SK-N-SH (cell line): ENCODE measurements at regions of chr12 and their contacts with region 1.

Region 1: DNA sequence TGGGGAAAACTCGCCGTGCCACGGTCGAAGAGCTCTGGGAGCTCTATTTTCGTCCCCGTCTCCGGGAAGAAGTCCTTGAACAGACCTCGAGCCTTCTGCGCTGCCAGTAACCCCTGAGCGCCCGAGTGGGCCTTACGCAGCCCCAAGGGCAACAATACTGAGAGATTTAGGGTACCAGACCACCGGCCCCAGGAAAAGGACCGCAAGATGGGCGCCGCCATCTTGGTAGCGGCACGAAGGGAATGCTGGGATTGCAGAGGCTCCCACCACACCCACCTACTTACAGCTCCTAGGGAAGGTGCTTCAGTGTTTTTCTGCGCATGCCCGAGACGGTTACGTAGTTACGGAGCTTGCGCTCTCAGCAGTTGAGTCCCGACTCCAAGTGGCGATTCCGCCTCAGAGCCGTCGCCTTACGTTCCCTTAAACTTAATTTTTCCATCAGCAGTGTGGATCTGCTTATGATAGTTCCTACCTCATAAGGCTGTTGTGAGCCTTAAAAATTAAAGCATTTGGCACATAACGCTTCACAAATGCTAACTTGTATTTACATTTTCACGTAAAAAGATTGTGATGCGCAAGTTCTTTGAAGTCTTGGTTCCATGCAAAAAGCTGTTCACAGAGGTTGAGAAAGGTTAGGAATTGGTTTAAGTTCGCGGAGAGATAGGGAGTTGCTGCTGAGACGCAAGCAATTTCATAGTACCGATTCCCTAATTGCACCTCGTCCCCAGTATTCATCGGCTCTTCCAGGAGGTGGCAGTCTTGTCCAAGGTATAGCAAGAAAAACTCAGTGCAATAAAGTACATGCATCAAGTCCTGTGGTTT is at the start of gene YARS2:
- DNase-seq: peak; percentile 90
- H3K4me3 ChIP-seq: peak within 1 kb of the TSS; percentile 87 to 97
- H3K27ac ChIP-seq: peak within 1 kb of the TSS; percentile 82 to 91
- H3K4me1 ChIP-seq: peaks cover 9 to 12% of the 10 kb centered on the region in 2 experiments; a peak in 1 of 4 replicates
- H3K27me3 ChIP-seq: no peaks in the 10 kb centered on the region
- CTCF ChIP-seq: peak; percentile 94
- EP300 ChIP-seq: no peak
- RAD21 ChIP-seq: peak; percentile 98
- polyA plus RNA-seq, gene YARS2: 14.3 and 16.5 TPM in 2 replicates

Region 2: DNA sequence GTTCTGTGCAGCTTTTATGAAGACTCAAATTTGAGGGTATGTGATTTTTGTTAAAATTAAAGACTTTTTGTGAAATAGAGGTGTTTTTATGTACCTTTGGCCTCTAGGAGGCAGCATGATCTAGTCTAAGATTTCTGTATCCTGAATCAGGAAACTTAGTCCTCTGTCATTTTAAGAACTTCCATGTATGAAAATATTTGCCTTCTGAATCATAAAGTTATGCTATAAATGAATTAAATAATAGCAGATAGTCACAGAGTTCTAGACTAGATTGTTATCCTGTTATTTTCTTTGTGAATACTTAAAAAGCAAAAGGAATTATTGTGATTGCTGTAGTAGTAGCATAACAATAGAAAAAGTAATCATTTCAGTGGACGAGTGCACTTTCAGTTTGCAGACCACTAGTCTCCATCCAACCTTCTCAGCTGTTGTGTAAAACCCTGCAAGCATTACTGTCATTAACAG is 300.2 kb before region 1 on chr12:
- CTCF ChIA-PET with region 1: interaction called, 37 read pairs
- POLR2A ChIA-PET with region 1: interaction called, 3 read pairs
- DNase-seq: peak; percentile 56
- H3K4me3 ChIP-seq: peak overlapping the region; percentile 31 to 53
- H3K27ac ChIP-seq: peak overlapping the region in 1 of 2 experiments; percentile 49; a peak in 2 of 4 replicates
- H3K4me1 ChIP-seq: peaks cover 0 to 25% of the 10 kb centered on the region in 2 experiments; a peak in 3 of 4 replicates
- H3K27me3 ChIP-seq: no peaks in the 10 kb centered on the region
- CTCF ChIP-seq: peak; percentile 84
- EP300 ChIP-seq: no peak
- RAD21 ChIP-seq: peak; percentile 90

Region 3: DNA sequence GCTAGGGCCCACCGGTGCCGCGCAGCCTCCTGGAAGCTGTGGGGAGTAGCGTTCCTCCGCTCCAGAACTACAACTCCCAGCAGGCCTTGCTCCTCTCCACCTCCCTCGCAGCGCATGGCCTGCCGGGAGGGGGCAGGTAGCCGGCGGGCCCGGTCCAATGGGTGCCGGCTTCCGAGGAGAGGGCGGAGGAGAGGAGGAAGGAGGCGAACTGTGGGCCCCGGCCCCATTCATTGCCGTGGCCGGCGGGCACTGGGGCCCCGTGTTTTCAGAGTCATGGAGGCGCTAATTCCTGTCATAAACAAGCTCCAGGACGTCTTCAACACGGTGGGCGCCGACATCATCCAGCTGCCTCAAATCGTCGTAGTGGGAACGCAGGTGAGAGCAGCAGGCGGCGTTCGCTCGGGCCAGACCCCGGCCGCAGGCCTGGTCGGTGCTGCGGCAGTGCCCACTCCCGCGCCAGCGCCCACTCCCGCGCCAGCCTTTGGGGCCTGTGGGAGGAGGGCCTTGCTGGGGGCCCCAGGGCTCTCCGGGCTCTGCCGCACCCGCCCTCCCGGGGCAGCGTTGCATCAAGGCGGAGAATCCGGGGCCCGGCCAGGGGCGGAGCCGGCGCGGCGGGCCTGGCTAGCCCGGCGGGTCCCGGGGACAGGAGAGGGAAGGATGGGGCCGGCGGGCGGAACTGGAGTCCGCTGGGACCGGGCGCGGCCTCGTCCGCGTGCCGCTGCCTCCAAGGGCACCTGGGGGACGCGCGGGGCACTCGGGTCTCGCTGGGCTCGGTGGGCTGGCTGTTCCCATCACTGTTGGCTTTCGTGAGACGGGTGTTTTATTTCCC is 76.6 kb before region 1 on chr12 and contains the start of gene DNM1L:
- CTCF ChIA-PET with region 1: interaction called, 26 read pairs
- POLR2A ChIA-PET with region 1: interaction called, 9 read pairs
- DNase-seq: peak; percentile 97
- H3K4me3 ChIP-seq: peak within 1 kb of the TSS; percentile 69
- H3K27ac ChIP-seq: peak within 1 kb of the TSS; percentile 87 to 92
- H3K4me1 ChIP-seq: no peaks in the 10 kb centered on the region; a peak in 2 of 4 replicates
- H3K27me3 ChIP-seq: no peaks in the 10 kb centered on the region
- CTCF ChIP-seq: no peak
- EP300 ChIP-seq: no peak
- RAD21 ChIP-seq: peak; percentile 12; the same call in 1 of the 2 replicates
- polyA plus RNA-seq, gene DNM1L: 26.6 and 39.5 TPM in 2 replicates

Region 4: DNA sequence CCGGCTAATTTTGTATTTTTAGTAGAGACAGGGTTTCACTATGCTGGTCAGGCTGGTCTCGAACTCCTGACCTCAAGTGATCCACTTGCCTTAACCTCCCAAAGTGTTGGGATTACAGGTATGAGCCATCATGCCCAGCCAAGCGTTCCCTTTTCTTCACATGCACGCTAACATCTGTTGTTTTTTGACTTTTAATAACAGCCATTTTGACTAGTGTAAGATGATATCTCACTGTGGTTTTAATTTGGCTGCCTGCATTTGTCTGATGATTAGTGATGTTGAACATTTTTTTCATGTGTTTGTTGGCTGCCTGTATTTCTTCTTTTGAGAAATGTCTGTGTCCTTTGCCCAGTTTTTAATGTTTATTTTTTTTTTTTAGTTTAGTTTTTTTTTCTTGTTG is 10.0 kb after region 1 on chr12:
- CTCF ChIA-PET with region 1: interaction called, 22 read pairs
- POLR2A ChIA-PET with region 1: no interaction called
- DNase-seq: no peak
- H3K4me3 ChIP-seq: no peak overlapping the region
- H3K27ac ChIP-seq: no peak overlapping the region
- H3K4me1 ChIP-seq: no peaks in the 10 kb centered on the region
- H3K27me3 ChIP-seq: 0 out of 2 replicates have a peak, but pooled peaks cover 10% of the 10 kb centered on the region
- CTCF ChIP-seq: no peak
- EP300 ChIP-seq: no peak
- RAD21 ChIP-seq: no peak

Region 5: GRCh38 chr12:32826807-32827412 is 71.0 kb after region 1 on chr12:
- CTCF ChIA-PET with region 1: interaction called, 10 read pairs
- POLR2A ChIA-PET with region 1: interaction called, 10 read pairs
- DNase-seq: peak; percentile 65
- H3K4me3 ChIP-seq: no peak overlapping the region; a peak in 1 of 4 replicates
- H3K27ac ChIP-seq: peak overlapping the region in 1 of 2 experiments; percentile 95; a peak in 2 of 4 replicates
- H3K4me1 ChIP-seq: peaks cover 0 to 18% of the 10 kb centered on the region in 2 experiments; a peak in 2 of 4 replicates
- H3K27me3 ChIP-seq: no peaks in the 10 kb centered on the region
- CTCF ChIP-seq: no peak
- EP300 ChIP-seq: peak in 1 of 2 experiments; percentile 90; a peak in 2 of 4 replicates
- RAD21 ChIP-seq: peak; percentile 8; the same call in 1 of the 2 replicates

Region 6: GRCh38 chr12:32906407-32907165 is 150.7 kb after region 1 on chr12:
- CTCF ChIA-PET with region 1: interaction called, 13 read pairs
- POLR2A ChIA-PET with region 1: interaction called, 4 read pairs
- DNase-seq: no peak
- H3K4me3 ChIP-seq: no peak overlapping the region
- H3K27ac ChIP-seq: no peak overlapping the region
- H3K4me1 ChIP-seq: no peaks in the 10 kb centered on the region
- H3K27me3 ChIP-seq: no peaks in the 10 kb centered on the region; the same call in 1 of the 2 replicates
- CTCF ChIP-seq: no peak
- EP300 ChIP-seq: no peak
- RAD21 ChIP-seq: no peak

Region 7: DNA sequence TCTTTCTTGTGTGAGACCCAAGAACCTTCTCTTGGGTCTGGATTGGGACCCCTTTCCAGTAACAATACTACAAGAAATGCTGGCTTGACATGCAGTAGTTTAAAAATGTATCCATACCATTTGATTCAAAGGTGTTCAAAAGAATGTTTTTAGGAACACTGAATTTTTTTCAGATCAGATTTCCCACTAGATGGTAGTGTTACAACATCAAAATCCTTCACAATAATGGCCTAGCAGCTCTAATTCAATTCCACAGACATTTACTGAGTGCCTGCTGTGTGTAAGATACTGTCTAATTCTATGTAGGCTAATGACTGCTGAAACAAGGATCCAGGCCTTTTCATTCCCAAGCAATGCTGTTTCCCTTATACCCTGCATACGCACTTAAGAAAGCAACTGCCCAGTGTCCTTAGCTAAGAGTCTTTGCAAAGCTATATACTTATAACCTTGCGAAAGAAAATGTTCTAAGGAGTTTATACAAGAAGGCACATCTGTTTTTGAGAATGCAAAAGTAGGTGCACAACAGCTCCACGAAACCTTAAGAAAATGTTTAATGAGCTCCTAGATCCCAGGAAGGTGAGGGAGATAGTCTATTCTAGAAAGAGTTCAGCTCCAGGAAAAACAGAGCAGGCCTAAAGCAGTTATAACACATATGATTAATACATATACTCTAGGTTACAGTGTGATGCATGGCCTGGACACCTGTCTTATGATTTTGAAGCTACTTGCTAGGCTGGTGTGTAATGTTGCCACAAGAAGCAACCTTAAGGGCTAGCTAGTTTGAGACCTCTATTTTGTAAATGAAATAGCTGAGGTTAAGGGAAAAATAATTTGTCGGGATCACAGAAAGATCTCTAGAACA is 191.6 kb after region 1 on chr12:
- CTCF ChIA-PET with region 1: interaction called, 11 read pairs
- POLR2A ChIA-PET with region 1: no interaction called
- DNase-seq: peak; percentile 54
- H3K4me3 ChIP-seq: no peak overlapping the region
- H3K27ac ChIP-seq: no peak overlapping the region
- H3K4me1 ChIP-seq: no peaks in the 10 kb centered on the region
- H3K27me3 ChIP-seq: no peaks in the 10 kb centered on the region
- CTCF ChIP-seq: peak; percentile 39
- EP300 ChIP-seq: no peak
- RAD21 ChIP-seq: peak; percentile 74